ENCODE measurements at regions of chr2 and their contacts with region 1.

Region 1: DNA sequence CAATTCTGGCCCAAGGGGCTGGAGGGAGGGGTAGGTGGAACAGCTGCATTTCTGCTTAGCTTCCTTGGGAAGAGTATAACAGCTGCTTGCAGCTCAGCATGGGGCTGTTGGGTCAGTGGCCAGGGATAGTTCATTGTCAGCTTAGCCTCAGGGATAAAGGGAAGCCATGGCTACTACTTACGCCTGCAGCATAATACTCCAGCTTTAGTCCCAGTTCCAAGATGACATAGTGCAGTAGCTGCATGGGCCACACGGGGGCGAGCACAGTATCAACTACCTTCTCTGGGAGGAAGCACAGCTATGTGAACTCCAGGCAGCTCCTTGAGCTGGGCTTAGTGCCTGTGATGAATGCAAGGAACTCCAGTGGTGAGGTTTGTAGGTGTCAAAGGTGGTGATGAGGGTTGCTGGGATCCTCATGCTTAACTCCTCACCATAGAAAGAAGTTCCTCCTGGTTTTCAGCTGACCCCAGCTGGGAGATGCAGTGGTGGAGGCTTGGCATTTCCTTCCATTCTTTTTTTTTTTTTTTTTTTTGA is 35.4 kb upstream of the RHOB start:
- DNase-seq: peak; percentile 79 to 86
- ATAC-seq: peak; percentile 100
- H3K4me3 ChIP-seq: no peak overlapping the region
- H3K27ac ChIP-seq: no peak overlapping the region
- H3K4me1 ChIP-seq: peaks cover 4% of the 10 kb centered on the region; the same call in 1 of the 3 replicates
- CTCF ChIP-seq: peak; percentile 81
- EP300 ChIP-seq: no peak
- POLR2A ChIP-seq: no peak
- RAD21 ChIP-seq: peak; percentile 79 to 86

Region 2: DNA sequence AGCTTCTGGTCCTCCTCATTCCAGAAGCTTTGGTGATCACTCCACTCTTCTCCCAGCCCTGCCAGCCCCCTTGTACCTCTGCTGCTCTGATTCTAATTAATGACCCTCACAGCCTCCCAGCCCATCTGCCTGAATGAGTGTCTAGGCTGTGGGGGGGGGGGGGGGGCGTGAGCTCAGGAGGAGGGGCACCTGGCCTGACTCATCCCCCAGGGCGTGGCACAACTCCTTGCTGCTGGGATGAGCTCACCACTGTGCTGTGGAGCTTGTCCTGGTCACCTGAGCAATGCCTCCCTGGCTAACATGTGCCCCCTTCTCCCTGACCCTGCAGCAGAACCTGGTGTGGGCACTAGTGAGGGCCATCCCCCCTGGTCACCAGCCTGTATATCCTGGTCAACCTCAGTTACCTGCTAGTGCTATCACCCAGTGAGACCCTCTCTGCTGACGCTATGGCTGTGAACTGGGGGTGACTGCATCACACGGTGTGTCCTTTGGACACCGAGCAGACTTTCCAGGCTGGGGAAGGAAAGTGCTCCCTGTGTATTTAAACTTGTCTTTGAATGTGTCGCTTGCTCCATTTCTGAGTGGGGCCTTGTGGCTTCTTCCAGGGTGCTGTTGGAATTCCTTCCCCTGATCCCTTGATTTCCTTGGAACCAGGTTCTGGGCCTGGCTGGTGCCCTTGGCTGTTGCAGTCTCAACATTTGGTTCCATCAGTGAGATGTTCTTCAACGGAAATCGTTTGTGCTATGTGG is 19.3 kb before region 1 on chr2:
- CTCF ChIA-PET with region 1: interaction called, 135 read pairs
- POLR2A ChIA-PET with region 1: no interaction called
- DNase-seq: peak; percentile 34 to 44
- ATAC-seq: peak; percentile 26 to 37; a peak in 3 of 6 replicates
- H3K4me3 ChIP-seq: no peak overlapping the region
- H3K27ac ChIP-seq: no peak overlapping the region
- H3K4me1 ChIP-seq: no peaks in the 10 kb centered on the region
- CTCF ChIP-seq: no peak
- EP300 ChIP-seq: no peak
- POLR2A ChIP-seq: no peak
- RAD21 ChIP-seq: no peak

Region 3: GRCh38 chr2:20398956-20399567 is 12.4 kb before region 1 on chr2:
- CTCF ChIA-PET with region 1: interaction called, 135 read pairs
- POLR2A ChIA-PET with region 1: no interaction called
- DNase-seq: no peak
- ATAC-seq: no peak
- H3K4me3 ChIP-seq: no peak overlapping the region
- H3K27ac ChIP-seq: no peak overlapping the region
- H3K4me1 ChIP-seq: no peaks in the 10 kb centered on the region
- CTCF ChIP-seq: no peak
- EP300 ChIP-seq: no peak
- POLR2A ChIP-seq: no peak
- RAD21 ChIP-seq: no peak

Region 4: GRCh38 chr2:20424300-20425290 is 13.2 kb after region 1 on chr2:
- CTCF ChIA-PET with region 1: interaction called, 128 read pairs
- POLR2A ChIA-PET with region 1: no interaction called
- DNase-seq: no peak
- ATAC-seq: 0 out of 6 replicates have a peak, but pooled peaks of 1 of the 2 experiments have one; percentile 10
- H3K4me3 ChIP-seq: no peak overlapping the region
- H3K27ac ChIP-seq: peak overlapping the region in 1 of 2 experiments; percentile 3; a peak in 1 of 6 replicates
- H3K4me1 ChIP-seq: 0 out of 3 replicates have a peak, but pooled peaks cover 2% of the 10 kb centered on the region
- CTCF ChIP-seq: no peak
- EP300 ChIP-seq: no peak
- POLR2A ChIP-seq: no peak
- RAD21 ChIP-seq: no peak

Region 5: GRCh38 chr2:20430461-20431300 is 19.3 kb after region 1 on chr2:
- CTCF ChIA-PET with region 1: interaction called, 128 read pairs
- POLR2A ChIA-PET with region 1: no interaction called
- DNase-seq: no peak
- ATAC-seq: no peak
- H3K4me3 ChIP-seq: no peak overlapping the region
- H3K27ac ChIP-seq: no peak overlapping the region; a peak in 1 of 6 replicates
- H3K4me1 ChIP-seq: peaks cover 5% of the 10 kb centered on the region; the same call in 2 of the 3 replicates
- CTCF ChIP-seq: no peak
- EP300 ChIP-seq: no peak
- POLR2A ChIP-seq: no peak
- RAD21 ChIP-seq: no peak

Region 6: GRCh38 chr2:20438334-20439192 is 27.1 kb after region 1 on chr2:
- CTCF ChIA-PET with region 1: interaction called, 116 read pairs
- POLR2A ChIA-PET with region 1: interaction called, 10 read pairs
- DNase-seq: peak; percentile 78 to 91
- ATAC-seq: peak; percentile 80 to 86
- H3K4me3 ChIP-seq: peak overlapping the region; percentile 35
- H3K27ac ChIP-seq: peak overlapping the region; percentile 79 to 87
- H3K4me1 ChIP-seq: peaks cover 38% of the 10 kb centered on the region
- CTCF ChIP-seq: no peak
- EP300 ChIP-seq: peak; percentile 76 to 88; a peak in 2 of 5 replicates
- POLR2A ChIP-seq: no peak
- RAD21 ChIP-seq: no peak